ENCODE measurements at regions of chr20 and their contacts with region 1.

Region 1: DNA sequence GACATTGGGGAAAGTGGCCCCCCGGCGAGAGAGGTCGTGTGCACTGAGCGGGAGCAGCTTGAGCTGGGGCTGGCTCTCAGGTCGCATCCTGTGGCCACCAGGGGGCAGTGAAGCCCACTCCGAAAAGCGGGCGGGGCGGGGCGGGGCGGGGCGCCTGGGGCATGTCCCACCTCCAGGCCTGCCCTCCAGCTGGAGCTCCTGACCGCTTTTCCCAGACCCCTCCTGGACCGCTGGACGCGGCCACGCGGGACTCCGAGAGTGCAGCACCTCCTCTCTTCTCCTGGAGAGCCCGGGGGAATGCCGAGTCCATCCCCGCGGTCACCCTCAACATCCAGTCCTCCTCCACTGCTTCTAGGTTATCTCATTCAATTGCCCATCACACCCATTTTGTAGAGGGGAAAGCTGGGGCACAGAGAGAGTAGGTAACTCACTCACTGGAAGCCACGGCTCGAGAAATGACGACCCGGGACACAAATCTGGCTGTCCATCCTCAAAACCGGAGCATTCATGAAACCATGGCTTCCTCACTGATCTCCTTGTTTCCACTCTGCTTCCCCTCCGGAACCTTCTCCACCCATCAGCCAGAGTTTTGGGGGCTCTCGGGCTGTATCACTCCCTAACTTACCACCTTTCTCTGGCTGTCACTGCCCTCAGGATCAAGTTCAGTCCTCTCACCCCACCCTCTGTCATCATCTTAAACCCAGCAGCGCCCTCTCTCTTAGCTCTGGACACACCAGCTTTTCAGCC is 24.1 kb downstream of the COX4I2 start:
- DNase-seq: peak in 1 of 2 experiments; percentile 73
- H3K4me3 ChIP-seq: no peak overlapping the region; the same call in 1 of the 2 replicates
- H3K27ac ChIP-seq: peak overlapping the region; percentile 30
- H3K4me1 ChIP-seq: peaks cover 47% of the 10 kb centered on the region
- H3K27me3 ChIP-seq: no peaks in the 10 kb centered on the region
- CTCF ChIP-seq: peak; percentile 79

Region 2: DNA sequence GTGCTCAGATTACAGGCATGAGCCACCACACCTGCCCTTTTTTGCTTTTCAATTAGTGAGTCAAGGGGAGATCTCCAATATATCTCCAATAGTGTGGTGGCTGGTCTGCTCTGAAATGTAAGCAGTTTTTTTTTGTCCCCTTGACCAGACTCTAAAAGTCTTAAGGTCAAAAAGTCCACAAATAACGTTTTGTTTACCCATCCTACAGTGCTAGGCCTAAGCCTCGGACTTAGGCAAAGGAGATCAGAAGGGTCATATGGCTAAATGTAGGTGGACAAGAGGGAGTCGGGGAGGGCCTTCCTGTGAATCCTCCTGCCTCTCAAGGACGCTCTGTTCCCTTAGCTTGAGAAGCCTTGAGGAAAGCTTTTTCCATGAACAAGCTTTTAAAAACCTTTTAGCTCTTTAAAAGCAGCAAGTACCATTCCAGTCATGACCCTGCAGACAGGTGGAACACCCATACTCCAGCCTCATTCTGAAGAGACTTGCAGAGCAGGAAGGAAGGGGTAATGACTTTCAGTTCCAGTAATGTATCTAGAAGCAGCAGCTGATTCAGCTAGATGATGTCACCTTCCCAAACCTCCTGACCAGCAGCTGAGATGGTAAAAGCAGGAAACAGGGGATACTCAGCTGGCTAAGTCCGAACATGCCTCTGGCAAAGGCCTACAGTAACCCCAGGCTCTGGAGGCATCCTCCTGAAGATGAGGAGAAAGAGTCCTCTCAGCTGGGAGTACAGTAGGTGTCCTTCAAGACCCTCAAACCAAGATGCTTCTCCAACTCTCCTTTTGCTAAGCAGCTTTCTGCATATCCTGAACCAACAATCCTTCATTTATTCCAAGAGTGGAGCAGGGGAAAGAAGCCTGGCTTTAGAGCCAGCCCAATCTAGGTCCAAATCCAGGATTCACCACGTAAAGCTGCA is 37.3 kb after region 1 on chr20:
- CTCF ChIA-PET with region 1: interaction called, 11 read pairs
- POLR2A ChIA-PET with region 1: interaction called, 5 read pairs
- intact Hi-C with region 1: no loop called
- DNase-seq: peak; percentile 58 to 91
- H3K4me3 ChIP-seq: no peak overlapping the region
- H3K27ac ChIP-seq: peak overlapping the region; percentile 95
- H3K4me1 ChIP-seq: peaks cover 90% of the 10 kb centered on the region
- H3K27me3 ChIP-seq: no peaks in the 10 kb centered on the region
- CTCF ChIP-seq: no peak

Measured in PC-9 (cell line).